HepG2 (cell line): ENCODE measurements at regions of chr7 and their contacts with region 1.

Region 1: GRCh38 chr7:115356139-115356746 is 434.3 kb downstream of the MDFIC start:
- DNase-seq: peak; percentile 9
- ATAC-seq: no peak
- H3K4me3 ChIP-seq: no peak overlapping the region
- H3K27ac ChIP-seq: no peak overlapping the region
- H3K4me1 ChIP-seq: no peaks in the 10 kb centered on the region
- H3K27me3 ChIP-seq: no peaks in the 10 kb centered on the region
- CTCF ChIP-seq: no peak
- EP300 ChIP-seq: no peak
- POLR2A ChIP-seq: no peak
- RAD21 ChIP-seq: no peak

Region 2: DNA sequence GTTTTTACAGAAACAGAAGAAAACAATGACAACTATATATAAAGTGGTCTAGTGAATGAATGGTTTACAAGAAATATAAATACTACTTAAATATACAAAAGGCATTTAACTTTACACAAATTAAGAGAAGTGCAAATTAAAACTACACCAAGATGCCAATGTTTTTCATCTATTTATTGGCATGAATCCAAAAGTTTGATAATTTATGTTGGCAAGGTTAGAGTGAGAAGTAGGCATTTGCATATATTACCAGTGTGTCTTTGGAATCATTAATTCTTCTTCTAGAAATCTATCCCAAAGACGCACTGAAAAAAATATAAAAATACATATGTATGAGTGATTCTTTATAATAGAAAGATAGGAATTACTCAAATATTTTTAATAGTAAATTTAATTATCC is 23.1 kb after region 1 on chr7:
- CTCF ChIA-PET with region 1: no interaction called
- POLR2A ChIA-PET with region 1: no interaction called
- in situ Hi-C with region 1: no loop called
- intact Hi-C with region 1: no loop called
- DNase-seq: no peak
- ATAC-seq: no peak
- H3K4me3 ChIP-seq: no peak overlapping the region
- H3K27ac ChIP-seq: no peak overlapping the region
- H3K4me1 ChIP-seq: no peaks in the 10 kb centered on the region
- H3K27me3 ChIP-seq: no peaks in the 10 kb centered on the region
- CTCF ChIP-seq: no peak
- EP300 ChIP-seq: no peak
- POLR2A ChIP-seq: no peak
- RAD21 ChIP-seq: no peak

Region 3: GRCh38 chr7:115679976-115680375 is 323.7 kb after region 1 on chr7:
- CTCF ChIA-PET with region 1: interaction called, 4 read pairs
- POLR2A ChIA-PET with region 1: no interaction called
- in situ Hi-C with region 1: no loop called
- intact Hi-C with region 1: loop called (anchors 1 kb)
- DNase-seq: peak; percentile 58
- ATAC-seq: peak; percentile 76
- H3K4me3 ChIP-seq: no peak overlapping the region
- H3K27ac ChIP-seq: no peak overlapping the region
- H3K4me1 ChIP-seq: peaks cover 34% of the 10 kb centered on the region
- H3K27me3 ChIP-seq: no peaks in the 10 kb centered on the region
- CTCF ChIP-seq: peak; percentile 65
- EP300 ChIP-seq: no peak
- POLR2A ChIP-seq: no peak
- RAD21 ChIP-seq: 0 out of 2 replicates have a peak, but pooled peaks have one; percentile 27

Region 4: DNA sequence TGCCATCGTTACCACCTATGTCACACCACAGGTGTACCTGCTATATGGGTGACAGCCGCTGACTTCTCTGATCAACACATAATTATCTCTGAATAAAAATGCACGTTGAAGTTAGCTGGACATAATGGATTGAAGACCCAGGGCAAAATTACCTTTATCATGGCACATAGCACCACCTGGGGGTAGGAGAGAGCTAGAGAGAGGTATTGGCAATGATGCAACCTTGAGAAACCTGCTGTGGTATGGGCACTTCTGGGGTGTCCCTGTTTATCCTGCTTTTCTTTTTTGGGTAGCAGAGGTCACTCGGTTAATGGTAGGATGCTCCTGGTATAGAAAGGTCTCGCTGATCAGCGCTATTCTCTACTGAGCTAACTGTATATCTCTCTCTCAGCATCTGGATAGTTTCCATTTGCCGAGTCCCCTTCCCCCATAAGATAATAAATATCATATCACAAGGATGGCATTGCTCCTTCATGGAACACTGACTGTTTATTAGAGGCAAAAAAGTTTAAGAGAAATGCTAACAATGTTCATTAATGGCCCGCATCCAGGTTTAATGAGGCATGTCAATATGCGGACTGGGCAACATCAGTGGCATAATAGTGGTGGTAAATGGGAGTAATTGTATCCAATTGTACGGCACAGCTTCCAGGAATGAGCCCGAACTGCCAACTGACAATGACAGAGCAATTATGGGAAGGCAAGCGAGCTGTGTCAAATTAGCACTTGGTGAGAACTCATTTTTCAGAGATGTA is 351.2 kb after region 1 on chr7:
- CTCF ChIA-PET with region 1: no interaction called
- POLR2A ChIA-PET with region 1: no interaction called
- in situ Hi-C with region 1: loop called (anchors 25 kb)
- intact Hi-C with region 1: loop called (anchors 1 kb)
- DNase-seq: peak; percentile 30
- ATAC-seq: peak; percentile 94
- H3K4me3 ChIP-seq: no peak overlapping the region
- H3K27ac ChIP-seq: no peak overlapping the region
- H3K4me1 ChIP-seq: no peaks in the 10 kb centered on the region
- H3K27me3 ChIP-seq: no peaks in the 10 kb centered on the region
- CTCF ChIP-seq: peak; percentile 67
- EP300 ChIP-seq: no peak
- POLR2A ChIP-seq: no peak
- RAD21 ChIP-seq: no peak

Region 5: GRCh38 chr7:115748131-115748738 is 392.0 kb after region 1 on chr7:
- CTCF ChIA-PET with region 1: interaction called, 3 read pairs
- POLR2A ChIA-PET with region 1: no interaction called
- in situ Hi-C with region 1: no loop called
- intact Hi-C with region 1: loop called (anchors 1 kb)
- DNase-seq: peak; percentile 41
- ATAC-seq: peak; percentile 92
- H3K4me3 ChIP-seq: no peak overlapping the region
- H3K27ac ChIP-seq: no peak overlapping the region
- H3K4me1 ChIP-seq: no peaks in the 10 kb centered on the region
- H3K27me3 ChIP-seq: no peaks in the 10 kb centered on the region
- CTCF ChIP-seq: peak; percentile 63
- EP300 ChIP-seq: no peak
- POLR2A ChIP-seq: no peak
- RAD21 ChIP-seq: no peak